ENCODE measurements at regions of chr10 and their contacts with region 1.

Region 1: GRCh38 chr10:102394079-102394800 is 1.3 kb upstream of the NFKB2 start:
- DNase-seq: peak; percentile 89 to 90
- ATAC-seq: peak; percentile 84 to 87
- H3K4me3 ChIP-seq: peak overlapping the region; percentile 68 to 79 (median 75)
- H3K27ac ChIP-seq: peak overlapping the region; percentile 90 to 92 (median 92)
- H3K4me1 ChIP-seq: peaks cover 21 to 22% of the 10 kb centered on the region in 2 donors
- H3K27me3 ChIP-seq: no peaks in the 10 kb centered on the region
- CTCF ChIP-seq: peak in 4 of 5 experiments; percentile 58 to 98 (median 97)
- POLR2A ChIP-seq: peak; percentile 88 to 91

Region 2: DNA sequence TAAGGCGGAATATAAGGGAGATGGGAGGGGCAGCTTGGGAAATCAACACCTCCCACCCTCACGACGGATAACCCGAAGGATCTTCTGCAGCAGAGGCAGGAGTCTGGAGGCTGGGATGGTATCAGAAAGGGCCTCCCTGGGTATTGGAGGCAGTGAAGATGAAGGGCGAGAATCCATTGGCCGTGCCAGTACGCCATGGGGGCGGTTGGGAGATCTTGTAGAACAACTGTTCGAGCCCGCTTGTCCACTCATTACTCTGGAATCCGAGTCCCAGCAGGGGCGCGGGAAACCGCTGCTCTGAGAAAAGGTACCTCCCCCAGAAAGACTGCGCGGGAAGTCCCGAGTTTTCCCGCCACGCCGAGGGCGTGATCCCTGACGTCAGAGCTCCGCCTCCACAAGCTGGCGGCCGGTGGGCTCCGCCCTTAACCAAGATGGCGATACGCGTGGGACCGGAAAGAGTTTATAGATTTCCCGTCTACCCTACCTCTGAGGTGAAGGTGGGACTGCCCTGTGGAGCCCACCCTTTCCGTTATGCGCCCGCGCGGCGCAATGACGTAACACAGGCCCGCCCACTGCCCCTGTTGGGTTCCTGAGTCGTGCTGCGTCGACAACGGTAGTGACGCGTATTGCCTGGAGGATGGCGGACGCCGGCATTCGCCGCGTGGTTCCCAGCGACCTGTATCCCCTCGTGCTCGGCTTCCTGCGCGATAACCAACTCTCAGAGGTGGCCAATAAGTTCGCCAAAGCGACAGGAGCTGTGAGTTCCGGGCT is 242.3 kb before region 1 on chr10 and contains the start of gene NOLC1:
- in situ Hi-C with region 1: no loop called
- intact Hi-C with region 1: loop called (anchors 1 kb)
- DNase-seq: peak; percentile 96 to 99
- ATAC-seq: peak; percentile 98 to 99
- H3K4me3 ChIP-seq: peak within 1 kb of the TSS; percentile 75 to 99 (median 92)
- H3K27ac ChIP-seq: peak within 1 kb of the TSS; percentile 82 to 97 (median 94)
- H3K4me1 ChIP-seq: peaks cover 12 to 16% of the 10 kb centered on the region in 2 donors
- H3K27me3 ChIP-seq: no peaks in the 10 kb centered on the region
- CTCF ChIP-seq: peak in 1 of 5 experiments; percentile 24
- POLR2A ChIP-seq: peak; percentile 84 to 90
- total RNA-seq, gene NOLC1: 37.2 to 76.7 (median 71.1) TPM

Region 3: GRCh38 chr10:102225646-102226541 is 168.3 kb before region 1 on chr10 and contains the start of gene ELOVL3:
- in situ Hi-C with region 1: no loop called
- intact Hi-C with region 1: loop called (anchors 1 kb)
- DNase-seq: peak; percentile 89 to 93
- ATAC-seq: peak; percentile 84 to 89
- H3K4me3 ChIP-seq: peak within 1 kb of the TSS; percentile 41 to 55 (median 44)
- H3K27ac ChIP-seq: peak within 1 kb of the TSS; percentile 74 to 82 (median 79)
- H3K4me1 ChIP-seq: peaks cover 23 to 24% of the 10 kb centered on the region in 2 donors
- H3K27me3 ChIP-seq: no peaks in the 10 kb centered on the region
- CTCF ChIP-seq: peak in 1 of 5 experiments; percentile 30
- POLR2A ChIP-seq: peak in 1 of 2 donors; percentile 33
- total RNA-seq, gene ELOVL3: 0.51 TPM in 1 of 4 donors, not detected in the others

Region 4: DNA sequence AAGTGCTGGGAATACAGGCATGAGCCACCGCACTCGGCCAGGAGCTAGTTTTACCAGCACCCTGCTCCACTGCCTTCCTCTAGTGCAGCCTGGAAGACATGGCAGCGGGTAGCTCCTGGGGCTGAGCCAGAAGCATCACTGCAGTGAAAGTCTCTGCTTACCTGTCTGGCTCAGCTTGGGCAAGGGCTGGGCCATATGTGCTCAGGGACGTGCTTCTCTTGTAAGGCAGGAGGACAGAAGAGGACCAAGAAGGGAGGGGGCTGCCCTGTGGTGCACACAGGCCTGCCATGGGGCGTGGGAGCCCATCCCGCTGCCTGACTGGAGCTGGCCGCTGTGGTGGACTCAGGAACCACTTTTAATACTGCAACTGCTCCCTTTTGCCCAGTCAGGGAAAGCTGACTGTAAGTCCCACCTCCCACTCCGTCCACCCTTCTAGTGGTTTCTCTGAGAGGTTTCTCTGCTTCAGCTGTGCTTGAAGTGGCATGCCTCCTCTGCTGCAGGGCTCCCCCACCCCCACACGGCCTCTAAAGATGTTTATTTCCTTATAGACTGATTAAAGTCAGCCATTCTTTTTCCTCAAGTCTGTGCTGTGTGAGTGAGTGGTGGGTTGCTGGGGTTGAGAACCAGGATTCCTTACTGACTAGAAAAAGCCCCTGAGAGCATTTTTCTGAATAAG is 82.4 kb after region 1 on chr10:
- in situ Hi-C with region 1: no loop called
- intact Hi-C with region 1: loop called (anchors 2 kb)
- DNase-seq: no peak
- ATAC-seq: no peak
- H3K4me3 ChIP-seq: no peak overlapping the region
- H3K27ac ChIP-seq: no peak overlapping the region
- H3K4me1 ChIP-seq: no peaks in the 10 kb centered on the region
- H3K27me3 ChIP-seq: no peaks in the 10 kb centered on the region
- CTCF ChIP-seq: no peak
- POLR2A ChIP-seq: no peak

Region 5: DNA sequence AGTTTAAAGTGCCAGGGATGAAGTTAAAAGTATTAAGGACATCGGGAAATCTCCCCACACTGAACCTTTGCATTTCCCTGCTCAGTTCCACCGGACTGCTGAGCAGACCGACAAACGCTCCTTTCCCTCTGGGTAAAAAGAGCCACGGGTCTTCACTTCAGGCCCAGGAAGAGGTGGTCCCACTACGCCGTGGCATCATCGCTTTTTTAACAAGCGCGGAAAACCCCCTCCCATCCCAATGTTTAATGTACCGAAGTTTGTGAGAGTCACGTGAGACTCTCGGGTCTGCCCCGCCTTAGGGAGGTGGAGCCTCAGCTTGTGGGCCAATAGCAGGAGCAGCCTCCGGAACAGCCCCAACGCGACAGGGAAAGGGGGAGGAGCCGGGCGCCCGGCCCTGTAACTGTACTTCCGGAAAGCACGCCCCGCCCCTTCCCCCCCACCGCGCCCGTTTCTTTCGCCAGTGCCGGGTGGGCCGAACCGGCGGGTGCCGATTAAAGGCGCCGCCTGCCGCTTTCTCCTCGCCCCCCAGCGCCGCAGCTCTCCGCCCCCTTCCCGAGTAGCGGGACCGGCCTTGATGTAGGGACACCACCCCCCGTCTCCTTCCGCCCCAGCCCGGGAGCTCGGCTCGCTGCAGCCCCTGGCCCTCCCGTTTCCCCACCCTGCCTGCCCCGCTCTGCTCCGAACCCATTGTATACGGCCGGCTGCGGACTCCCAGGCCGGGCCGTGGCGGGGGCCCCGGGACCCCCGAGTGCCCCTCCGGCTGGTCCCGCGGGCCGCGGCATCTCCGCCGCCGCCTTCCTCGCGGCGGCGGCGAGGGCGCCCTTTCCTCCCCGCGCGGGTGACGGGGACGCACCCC is 247.9 kb after region 1 on chr10:
- in situ Hi-C with region 1: no loop called
- intact Hi-C with region 1: loop called (anchors 1 kb)
- DNase-seq: peak; percentile 99
- ATAC-seq: peak; percentile 50 to 55
- H3K4me3 ChIP-seq: peak overlapping the region; percentile 62 to 90 (median 80)
- H3K27ac ChIP-seq: peak overlapping the region; percentile 99 to 100 (median 100)
- H3K4me1 ChIP-seq: peaks cover 12 to 15% of the 10 kb centered on the region in 2 donors
- H3K27me3 ChIP-seq: no peaks in the 10 kb centered on the region
- CTCF ChIP-seq: no peak
- POLR2A ChIP-seq: peak; percentile 96 to 98